Activated CD4-positive, alpha-beta memory T cell treated with anti-CD3 and anti-CD28 coated beads, Interleukin-2, amount 10 ng/mL, durations not matched to agents 7 days and 5 days (primary cell): ENCODE measurements at regions of chr12 and their contacts with region 1.

Region 1: DNA sequence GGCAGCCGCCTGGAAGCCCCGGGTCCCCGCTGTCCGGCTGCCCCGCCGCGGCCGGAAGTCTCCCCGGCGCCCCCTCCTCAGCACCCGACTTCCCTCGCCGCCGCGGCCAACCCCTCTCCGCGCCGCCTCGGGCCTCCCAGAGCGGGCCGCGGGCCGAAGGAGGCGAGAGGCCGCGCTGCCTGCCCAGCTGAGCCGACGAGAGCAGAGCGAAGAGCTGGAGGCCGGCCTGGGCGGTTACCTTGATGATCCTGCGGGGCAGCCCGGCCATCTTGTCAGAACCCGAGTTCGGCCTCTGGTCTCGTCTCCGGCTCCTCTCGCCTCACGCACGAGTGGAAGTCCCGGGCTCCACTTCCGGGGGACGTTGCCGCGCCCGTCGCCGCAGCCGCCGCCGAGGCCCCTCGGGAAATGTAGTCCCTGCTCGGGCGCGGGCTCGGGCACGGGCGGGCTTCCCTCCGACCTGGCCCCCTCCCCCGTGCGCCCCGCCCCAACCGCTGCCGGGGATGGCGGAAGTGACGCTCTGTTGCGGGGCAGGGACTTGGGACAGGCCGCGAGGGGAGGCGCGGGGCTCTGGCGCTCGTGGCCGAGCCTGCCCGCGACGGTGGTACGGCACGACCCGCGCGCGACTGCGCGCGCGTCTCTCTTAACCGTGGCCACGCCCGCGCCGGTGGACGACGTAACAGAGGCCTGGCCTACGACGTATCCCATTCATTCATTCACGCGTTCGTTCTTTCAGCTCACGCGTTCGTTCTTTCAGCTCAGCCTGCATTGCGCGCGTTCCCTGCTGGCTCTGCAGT is at the start of gene UBE2N:
- DNase-seq: peak; percentile 96
- H3K4me3 Mint-ChIP-seq: peak within 1 kb of the TSS; percentile 97
- H3K27ac Mint-ChIP-seq: peak within 1 kb of the TSS; percentile 95
- H3K4me1 Mint-ChIP-seq: peaks cover 46% of the 10 kb centered on the region
- H3K27me3 Mint-ChIP-seq: no peaks in the 10 kb centered on the region
- total RNA-seq, gene UBE2N: 159 to 170 TPM

Region 2: DNA sequence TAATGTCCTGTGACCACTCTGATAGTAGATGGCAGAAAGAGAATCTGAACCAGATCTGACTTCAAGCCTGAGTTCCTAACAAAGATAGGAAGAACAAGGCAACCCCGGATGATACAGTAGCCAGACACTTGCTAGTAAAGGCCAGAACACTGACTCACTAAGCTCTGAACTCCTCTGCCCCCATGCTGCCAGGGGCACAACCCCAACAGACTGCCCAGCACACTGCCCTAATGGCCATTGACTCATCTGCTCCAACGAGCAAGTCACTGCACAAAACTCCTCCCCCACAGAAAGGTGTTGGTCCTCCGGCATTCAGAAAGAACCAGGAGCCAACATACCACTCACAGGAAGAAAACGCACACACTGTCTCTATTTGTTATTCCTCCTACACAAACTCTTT is 243.7 kb before region 1 on chr12:
- CTCF ChIA-PET with region 1: no interaction called
- POLR2A ChIA-PET with region 1: no interaction called
- DNase-seq: no peak
- H3K4me3 Mint-ChIP-seq: no peak overlapping the region
- H3K27ac Mint-ChIP-seq: no peak overlapping the region
- H3K4me1 Mint-ChIP-seq: no peaks in the 10 kb centered on the region
- H3K27me3 Mint-ChIP-seq: peaks cover 26% of the 10 kb centered on the region

Region 3: GRCh38 chr12:93378373-93379325 is 63.2 kb before region 1 on chr12:
- CTCF ChIA-PET with region 1: interaction called, 3 read pairs
- POLR2A ChIA-PET with region 1: interaction called, 10 read pairs
- DNase-seq: peak; percentile 68
- H3K4me3 Mint-ChIP-seq: peak overlapping the region; percentile 100
- H3K27ac Mint-ChIP-seq: peak overlapping the region; percentile 100
- H3K4me1 Mint-ChIP-seq: peaks cover 34% of the 10 kb centered on the region
- H3K27me3 Mint-ChIP-seq: peaks cover 2% of the 10 kb centered on the region

Region 4: GRCh38 chr12:93427779-93428563 is 13.8 kb before region 1 on chr12:
- CTCF ChIA-PET with region 1: interaction called, 5 read pairs
- POLR2A ChIA-PET with region 1: interaction called, 11 read pairs
- DNase-seq: no peak
- H3K4me3 Mint-ChIP-seq: no peak overlapping the region
- H3K27ac Mint-ChIP-seq: no peak overlapping the region
- H3K4me1 Mint-ChIP-seq: peaks cover 69% of the 10 kb centered on the region
- H3K27me3 Mint-ChIP-seq: no peaks in the 10 kb centered on the region

Region 5: DNA sequence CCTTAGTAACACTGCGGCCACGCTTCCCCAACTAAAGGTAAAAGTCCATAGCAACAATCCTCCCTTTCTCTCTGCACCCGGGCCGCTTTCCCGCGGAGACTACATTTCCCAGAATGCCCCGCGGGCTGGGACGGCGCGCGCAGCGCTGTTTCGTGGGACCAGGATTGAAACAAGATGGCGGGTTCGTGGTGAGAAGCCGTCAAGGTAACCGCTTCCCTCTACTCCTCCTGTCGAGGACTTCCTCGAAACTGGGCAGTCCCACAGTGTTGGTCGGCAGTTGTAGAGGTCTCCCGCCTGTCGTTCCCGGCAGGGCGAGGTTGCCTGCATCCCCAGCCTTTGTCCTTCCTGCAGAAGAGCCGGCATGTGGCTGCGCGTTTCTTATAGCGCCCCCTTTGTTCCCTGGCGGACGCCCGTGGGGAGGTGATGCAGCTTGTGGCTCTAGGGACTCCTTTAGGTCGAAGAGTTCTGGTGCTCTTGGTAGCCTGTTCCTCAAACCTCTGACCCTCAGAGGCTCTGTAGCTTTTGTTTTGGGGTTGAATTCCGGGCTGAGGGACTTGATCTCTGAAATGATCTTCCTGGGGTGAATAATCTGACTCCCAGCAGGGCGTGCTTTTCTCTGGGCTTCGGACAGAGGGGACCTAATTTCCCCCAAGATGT is 25.7 kb after region 1 on chr12 and contains the start of gene MRPL42:
- CTCF ChIA-PET with region 1: interaction called, 11 read pairs
- POLR2A ChIA-PET with region 1: interaction called, 17 read pairs
- DNase-seq: peak; percentile 94
- H3K4me3 Mint-ChIP-seq: peak within 1 kb of the TSS; percentile 94
- H3K27ac Mint-ChIP-seq: peak within 1 kb of the TSS; percentile 88
- H3K4me1 Mint-ChIP-seq: peaks cover 31% of the 10 kb centered on the region
- H3K27me3 Mint-ChIP-seq: no peaks in the 10 kb centered on the region
- total RNA-seq, gene MRPL42: 57.2 to 58.0 TPM